ENCODE measurements at regions of chr2 and their contacts with region 1.

Region 1: GRCh38 chr2:28566521-28567041 is 70.7 kb downstream of the PLB1 start:
- DNase-seq: peak; percentile 85
- H3K4me3 ChIP-seq: peak overlapping the region; percentile 42 to 71 (median 58)
- H3K27ac ChIP-seq: no peak overlapping the region
- H3K4me1 ChIP-seq: peaks cover 2% of the 10 kb centered on the region
- H3K27me3 ChIP-seq: no peaks in the 10 kb centered on the region
- CTCF ChIP-seq: peak; percentile 98 to 100
- POLR2A ChIP-seq: no peak

Region 2: GRCh38 chr2:27754138-27754588 is 812.4 kb before region 1 on chr2:
- CTCF ChIA-PET with region 1: interaction called, 4 read pairs
- POLR2A ChIA-PET with region 1: no interaction called
- dilution Hi-C with region 1: no loop called
- intact Hi-C with region 1: loop called (anchors 10 kb)
- DNase-seq: peak; percentile 81
- H3K4me3 ChIP-seq: no peak overlapping the region
- H3K27ac ChIP-seq: no peak overlapping the region
- H3K4me1 ChIP-seq: no peaks in the 10 kb centered on the region
- H3K27me3 ChIP-seq: no peaks in the 10 kb centered on the region
- CTCF ChIP-seq: peak; percentile 94 to 97
- POLR2A ChIP-seq: no peak

Region 3: DNA sequence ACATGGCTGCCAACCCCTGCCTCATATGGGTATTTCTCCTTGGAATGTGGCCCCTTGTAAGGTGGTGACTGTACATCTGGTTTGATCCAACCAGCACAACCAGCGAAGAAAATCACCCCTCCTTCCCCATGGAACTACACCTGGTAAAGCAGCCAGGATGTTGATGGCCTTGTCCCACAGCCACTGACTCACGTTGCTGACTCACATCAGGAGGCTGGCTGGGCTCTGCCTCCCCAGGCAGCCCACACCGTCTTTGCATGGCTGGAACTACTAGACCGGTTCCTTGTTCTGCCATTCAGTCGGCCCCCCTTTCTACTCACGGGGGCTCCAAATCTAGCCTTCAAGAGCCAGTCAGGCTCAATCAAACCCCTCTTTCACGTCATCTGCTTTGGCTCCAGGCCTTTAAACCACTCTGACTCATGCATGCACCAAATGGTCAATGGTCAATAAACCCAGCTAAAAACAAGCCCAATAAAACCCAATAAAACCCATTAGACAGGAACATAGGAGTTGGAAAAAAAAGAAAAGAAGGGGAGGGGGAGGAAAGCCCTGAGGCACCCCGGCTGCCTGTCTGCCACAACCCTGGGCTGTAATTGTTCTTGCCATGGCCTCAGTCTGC is 44.1 kb after region 1 on chr2:
- CTCF ChIA-PET with region 1: interaction called, 51 read pairs
- POLR2A ChIA-PET with region 1: interaction called, 6 read pairs
- dilution Hi-C with region 1: no loop called
- intact Hi-C with region 1: loop called (anchors 1 kb)
- DNase-seq: peak; percentile 92
- H3K4me3 ChIP-seq: no peak overlapping the region
- H3K27ac ChIP-seq: peak overlapping the region; percentile 76
- H3K4me1 ChIP-seq: peaks cover 38% of the 10 kb centered on the region
- H3K27me3 ChIP-seq: no peaks in the 10 kb centered on the region
- CTCF ChIP-seq: no peak
- POLR2A ChIP-seq: no peak

Region 4: GRCh38 chr2:28751252-28751955 is 184.8 kb after region 1 on chr2 and contains the start of gene PPP1CB:
- CTCF ChIA-PET with region 1: interaction called, 19 read pairs
- POLR2A ChIA-PET with region 1: interaction called, 18 read pairs
- dilution Hi-C with region 1: no loop called
- intact Hi-C with region 1: loop called (anchors 1 kb)
- DNase-seq: peak; percentile 98
- H3K4me3 ChIP-seq: peak within 1 kb of the TSS; percentile 93 to 98 (median 98)
- H3K27ac ChIP-seq: peak within 1 kb of the TSS; percentile 88
- H3K4me1 ChIP-seq: peaks cover 12% of the 10 kb centered on the region
- H3K27me3 ChIP-seq: no peaks in the 10 kb centered on the region
- CTCF ChIP-seq: peak in 1 of 2 donors; percentile 41
- POLR2A ChIP-seq: peak; percentile 81
- total RNA-seq, gene PPP1CB: 157 and 163 TPM in 2 replicates

Region 5: GRCh38 chr2:28870146-28870891 is 303.7 kb after region 1 on chr2 and contains the start of gene TRMT61B:
- CTCF ChIA-PET with region 1: no interaction called
- POLR2A ChIA-PET with region 1: no interaction called
- dilution Hi-C with region 1: no loop called
- intact Hi-C with region 1: loop called (anchors 1 kb)
- DNase-seq: peak; percentile 96
- H3K4me3 ChIP-seq: peak within 1 kb of the TSS; percentile 78 to 89 (median 85)
- H3K27ac ChIP-seq: peak within 1 kb of the TSS; percentile 62
- H3K4me1 ChIP-seq: peaks cover 12% of the 10 kb centered on the region
- H3K27me3 ChIP-seq: no peaks in the 10 kb centered on the region
- CTCF ChIP-seq: no peak
- POLR2A ChIP-seq: peak; percentile 90
- total RNA-seq, gene TRMT61B: 13.6 and 14.9 TPM in 2 replicates

Region 6: GRCh38 chr2:28958689-28959088 is 392.1 kb after region 1 on chr2:
- CTCF ChIA-PET with region 1: no interaction called
- POLR2A ChIA-PET with region 1: no interaction called
- dilution Hi-C with region 1: no loop called
- intact Hi-C with region 1: loop called (anchors 1 kb)
- DNase-seq: peak; percentile 66
- H3K4me3 ChIP-seq: no peak overlapping the region
- H3K27ac ChIP-seq: no peak overlapping the region
- H3K4me1 ChIP-seq: peaks cover 7% of the 10 kb centered on the region
- H3K27me3 ChIP-seq: no peaks in the 10 kb centered on the region
- CTCF ChIP-seq: peak; percentile 38 to 58
- POLR2A ChIP-seq: no peak

Measured in endothelial cell of umbilical vein (primary cell).